Panc1 (cell line): ENCODE measurements at regions of chr7 and their contacts with region 1.

Region 1: GRCh38 chr7:93055543-93056107 is 62.2 kb downstream of the SAMD9 start:
- DNase-seq: peak; percentile 22
- ATAC-seq: 0 out of 2 replicates have a peak, but pooled peaks have one; percentile 56
- H3K4me3 ChIP-seq: no peak overlapping the region
- H3K27ac ChIP-seq: peak overlapping the region; percentile 64; the same call in 1 of the 2 replicates
- H3K4me1 ChIP-seq: peaks cover 30% of the 10 kb centered on the region
- H3K27me3 ChIP-seq: 0 out of 2 replicates have a peak, but pooled peaks cover 3% of the 10 kb centered on the region
- CTCF ChIP-seq: peak; percentile 75; the same call in 1 of the 2 replicates

Region 2: GRCh38 chr7:92461027-92462003 is 594.3 kb before region 1 on chr7:
- CTCF ChIA-PET with region 1: no interaction called
- POLR2A ChIA-PET with region 1: no interaction called
- in situ Hi-C with region 1: no loop called
- intact Hi-C with region 1: loop called (anchors 5 kb)
- DNase-seq: peak; percentile 33
- ATAC-seq: peak; percentile 90
- H3K4me3 ChIP-seq: no peak overlapping the region
- H3K27ac ChIP-seq: peak overlapping the region; percentile 15; the same call in 1 of the 2 replicates
- H3K4me1 ChIP-seq: peaks cover 3% of the 10 kb centered on the region; the same call in 1 of the 2 replicates
- H3K27me3 ChIP-seq: no peaks in the 10 kb centered on the region
- CTCF ChIP-seq: peak; percentile 92

Region 3: DNA sequence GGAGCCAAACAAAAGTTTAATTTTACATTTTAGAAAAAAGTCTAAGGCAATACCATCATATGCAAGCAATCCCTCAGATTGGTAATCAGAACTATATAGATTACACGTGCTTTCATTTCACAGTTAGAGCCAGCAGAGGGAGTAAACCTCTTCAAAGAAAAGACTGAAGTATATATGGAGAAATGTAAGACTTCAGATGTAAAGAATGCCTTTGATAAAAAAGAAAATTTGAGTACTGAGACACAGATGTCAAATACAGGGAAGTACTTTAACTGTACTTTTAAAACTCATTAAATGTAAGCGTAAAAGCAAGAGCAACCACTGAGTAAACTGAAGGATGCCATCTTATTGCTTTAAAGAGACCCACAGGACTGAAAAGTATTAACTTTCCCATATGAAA is 364.0 kb before region 1 on chr7:
- CTCF ChIA-PET with region 1: no interaction called
- POLR2A ChIA-PET with region 1: no interaction called
- in situ Hi-C with region 1: no loop called
- intact Hi-C with region 1: loop called (anchors 5 kb)
- DNase-seq: peak; percentile 61
- ATAC-seq: peak; percentile 62
- H3K4me3 ChIP-seq: no peak overlapping the region
- H3K27ac ChIP-seq: peak overlapping the region; percentile 65
- H3K4me1 ChIP-seq: peaks cover 22% of the 10 kb centered on the region
- H3K27me3 ChIP-seq: no peaks in the 10 kb centered on the region
- CTCF ChIP-seq: peak; percentile 66; the same call in 1 of the 2 replicates

Region 4: DNA sequence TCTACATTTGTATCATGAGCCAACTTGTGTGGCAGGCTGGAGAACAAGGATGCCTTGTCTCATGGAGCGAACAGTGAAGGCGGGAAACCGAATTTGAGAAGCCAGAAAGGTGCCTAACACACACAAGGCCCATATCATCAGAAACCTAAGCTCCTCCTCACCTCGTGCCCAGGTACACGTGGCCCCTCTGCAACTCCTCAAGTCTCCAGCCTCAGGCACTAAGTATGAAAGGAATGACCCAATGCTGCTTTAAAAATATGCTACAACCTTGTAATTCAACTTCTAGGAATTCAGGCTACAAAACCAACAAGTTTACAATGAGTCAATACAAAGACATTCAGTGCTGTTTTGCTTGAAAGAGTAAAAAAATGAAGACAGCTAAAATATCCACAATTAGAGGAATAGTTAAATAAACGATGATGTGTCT is 314.9 kb before region 1 on chr7:
- CTCF ChIA-PET with region 1: no interaction called
- POLR2A ChIA-PET with region 1: no interaction called
- in situ Hi-C with region 1: no loop called
- intact Hi-C with region 1: no loop called
- DNase-seq: no peak
- ATAC-seq: peak; percentile 53; the same call in 1 of the 2 replicates
- H3K4me3 ChIP-seq: no peak overlapping the region
- H3K27ac ChIP-seq: peak overlapping the region; percentile 50; the same call in 1 of the 2 replicates
- H3K4me1 ChIP-seq: peaks cover 20% of the 10 kb centered on the region
- H3K27me3 ChIP-seq: no peaks in the 10 kb centered on the region
- CTCF ChIP-seq: no peak